Prostate gland (tissue), 2 donors: ENCODE measurements at regions of chr7 and their contacts with region 1.

Region 1: DNA sequence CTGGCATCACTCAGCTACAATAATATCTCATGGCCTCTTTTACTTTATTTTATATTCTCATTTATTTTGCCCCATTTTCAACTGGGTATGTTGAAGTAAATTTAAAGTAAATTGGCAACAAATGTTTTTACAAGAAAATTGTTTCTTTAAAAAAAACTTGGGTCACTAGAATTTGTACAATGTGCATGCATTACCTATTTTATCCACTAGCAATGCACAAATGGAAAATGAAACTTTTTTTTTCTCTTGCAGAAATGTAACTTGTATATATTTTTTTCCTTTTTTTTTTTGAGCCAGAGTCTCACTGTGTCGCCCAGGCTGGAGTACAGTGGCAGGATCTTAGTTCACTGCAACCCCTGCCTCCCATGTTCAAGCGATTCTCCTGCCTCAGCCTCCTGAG is 10.3 kb upstream of the H2AZ2 start:
- DNase-seq: no peak
- H3K4me3 ChIP-seq: no peak overlapping the region
- H3K27ac ChIP-seq: no peak overlapping the region
- H3K4me1 ChIP-seq: no peaks in the 10 kb centered on the region
- H3K27me3 ChIP-seq: no peaks in the 10 kb centered on the region
- CTCF ChIP-seq: peak in 1 of 4 experiments; percentile 8
- POLR2A ChIP-seq: no peak

Region 2: GRCh38 chr7:44921607-44922359 is 63.6 kb after region 1 on chr7:
- intact Hi-C with region 1: loop called (anchors 5 kb)
- DNase-seq: peak; percentile 64
- H3K4me3 ChIP-seq: no peak overlapping the region
- H3K27ac ChIP-seq: no peak overlapping the region
- H3K4me1 ChIP-seq: no peaks in the 10 kb centered on the region
- H3K27me3 ChIP-seq: no peaks in the 10 kb centered on the region
- CTCF ChIP-seq: peak; percentile 48 to 83 (median 58)
- POLR2A ChIP-seq: no peak

Region 3: GRCh38 chr7:45136106-45137060 is 278.2 kb after region 1 on chr7:
- intact Hi-C with region 1: loop called (anchors 5 kb)
- DNase-seq: peak; percentile 40
- H3K4me3 ChIP-seq: no peak overlapping the region
- H3K27ac ChIP-seq: no peak overlapping the region
- H3K4me1 ChIP-seq: no peaks in the 10 kb centered on the region
- H3K27me3 ChIP-seq: no peaks in the 10 kb centered on the region
- CTCF ChIP-seq: peak; percentile 46 to 86 (median 76)
- POLR2A ChIP-seq: no peak